ENCODE measurements at regions of chr20 and their contacts with region 1.

Region 1: DNA sequence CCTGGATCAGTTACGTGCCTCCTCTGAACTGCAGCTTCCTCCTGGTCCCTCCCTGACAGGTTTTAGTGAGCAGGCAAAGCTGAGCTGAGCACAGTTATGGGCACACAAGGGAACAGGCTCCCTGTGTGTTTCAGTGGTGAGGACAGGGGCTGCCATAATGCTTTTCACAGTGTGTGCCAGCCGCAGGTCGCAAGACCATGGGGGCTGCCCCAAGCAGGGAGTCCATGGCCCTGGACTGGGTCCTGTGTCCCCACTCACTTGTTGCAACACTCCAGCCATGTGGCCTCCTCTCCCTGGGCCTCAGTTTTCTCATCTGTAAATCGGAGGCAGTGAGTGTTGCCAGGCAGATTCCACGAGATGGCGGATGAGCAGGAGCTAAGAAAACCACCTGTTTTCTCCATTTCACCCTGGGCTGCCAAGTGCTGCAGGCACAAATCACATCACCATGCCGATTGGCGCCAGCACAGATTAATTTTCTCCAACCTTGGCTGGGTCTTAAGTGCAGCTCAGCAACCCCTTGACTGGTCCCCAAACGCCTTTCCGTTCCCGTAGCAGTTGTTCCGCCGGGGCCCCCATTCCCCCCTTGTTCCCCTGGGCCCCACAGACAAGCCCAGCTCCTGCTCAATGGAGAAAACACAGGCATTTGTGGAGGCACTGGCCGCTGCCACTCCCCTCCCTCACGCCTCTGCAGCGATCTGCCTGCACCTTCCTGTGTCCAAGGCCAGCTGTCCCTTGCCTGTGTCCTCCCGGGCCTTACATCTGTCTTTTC is 57.1 kb upstream of the NNAT start:
- DNase-seq: no peak
- H3K4me3 ChIP-seq: no peak overlapping the region
- H3K27ac ChIP-seq: no peak overlapping the region
- H3K4me1 ChIP-seq: no peaks in the 10 kb centered on the region
- H3K27me3 ChIP-seq: peaks cover 92% of the 10 kb centered on the region
- CTCF ChIP-seq: no peak

Region 2: GRCh38 chr20:37446286-37447032 is 17.5 kb before region 1 on chr20:
- CTCF ChIA-PET with region 1: no interaction called
- POLR2A ChIA-PET with region 1: interaction called, 12 read pairs
- intact Hi-C with region 1: no loop called
- DNase-seq: no peak
- H3K4me3 ChIP-seq: no peak overlapping the region
- H3K27ac ChIP-seq: no peak overlapping the region
- H3K4me1 ChIP-seq: no peaks in the 10 kb centered on the region
- H3K27me3 ChIP-seq: peaks cover 92% of the 10 kb centered on the region
- CTCF ChIP-seq: no peak